ENCODE measurements at regions of chr1 and their contacts with region 1.

Region 1: GRCh38 chr1:232630047-232630893 is at the start of gene SIPA1L2:
- DNase-seq: peak; percentile 94
- H3K4me3 ChIP-seq: peak within 1 kb of the TSS; percentile 68 to 70
- H3K27ac ChIP-seq: peak within 1 kb of the TSS; percentile 85 to 92
- H3K4me1 ChIP-seq: no peaks in the 10 kb centered on the region
- H3K27me3 ChIP-seq: no peaks in the 10 kb centered on the region
- CTCF ChIP-seq: peak in 2 of 4 experiments; percentile 49 to 54
- POLR2A ChIP-seq: peak; percentile 89
- total RNA-seq, gene SIPA1L2: 8.1 to 31.5 TPM

Region 2: GRCh38 chr1:231757101-231757404 is 873.2 kb before region 1 on chr1:
- intact Hi-C with region 1: loop called (anchors 10 kb)
- DNase-seq: no peak
- H3K4me3 ChIP-seq: no peak overlapping the region
- H3K27ac ChIP-seq: no peak overlapping the region
- H3K4me1 ChIP-seq: peaks cover 5% of the 10 kb centered on the region
- H3K27me3 ChIP-seq: no peaks in the 10 kb centered on the region
- CTCF ChIP-seq: no peak
- POLR2A ChIP-seq: no peak

Region 3: DNA sequence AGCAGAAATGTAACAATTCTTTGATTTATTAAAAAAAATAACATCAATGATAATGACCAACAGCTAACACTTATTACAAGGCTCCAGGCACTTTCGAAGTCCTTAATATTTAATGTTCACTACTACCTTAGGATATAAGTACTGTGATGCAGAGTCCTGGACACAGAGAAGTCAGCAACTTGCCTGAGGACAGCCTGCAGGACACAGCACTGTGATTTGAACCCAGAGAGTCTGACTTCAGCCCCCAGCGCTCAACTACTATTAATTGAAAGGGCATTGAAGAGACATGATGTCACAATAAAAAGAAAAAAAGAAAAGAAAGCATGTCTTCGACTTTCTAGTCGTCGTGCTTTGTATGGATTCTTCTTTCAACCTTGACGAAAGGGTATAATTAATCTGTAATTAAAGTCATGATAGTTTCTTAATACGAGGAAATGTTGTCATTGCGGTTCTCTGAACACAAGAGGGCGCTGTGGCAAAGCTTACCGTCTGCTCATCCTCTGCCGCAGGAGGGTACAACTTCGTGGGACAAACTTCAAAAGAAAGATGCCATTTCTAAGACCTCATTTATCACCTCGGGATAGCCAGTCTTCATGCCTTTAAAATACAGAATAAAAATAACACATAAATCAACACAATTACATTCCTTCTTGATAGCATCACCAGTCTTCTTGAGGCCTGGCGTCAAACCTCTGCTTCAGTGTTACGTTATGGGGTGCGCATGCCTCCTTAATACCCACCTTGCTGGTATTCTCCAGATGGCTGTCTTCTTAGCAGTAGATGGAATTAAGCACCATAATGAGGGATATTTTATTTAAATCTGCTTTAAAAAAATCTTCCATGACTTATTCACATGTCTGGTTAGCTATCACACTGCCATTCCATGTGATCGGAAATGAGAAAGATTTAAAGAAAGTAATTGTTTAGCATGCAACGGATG is 763.6 kb before region 1 on chr1:
- intact Hi-C with region 1: loop called (anchors 5 kb)
- DNase-seq: peak; percentile 48
- H3K4me3 ChIP-seq: no peak overlapping the region
- H3K27ac ChIP-seq: no peak overlapping the region
- H3K4me1 ChIP-seq: no peaks in the 10 kb centered on the region
- H3K27me3 ChIP-seq: no peaks in the 10 kb centered on the region
- CTCF ChIP-seq: peak; percentile 68 to 88 (median 81)
- POLR2A ChIP-seq: no peak

Region 4: GRCh38 chr1:232074265-232074664 is 556.0 kb before region 1 on chr1:
- intact Hi-C with region 1: no loop called
- DNase-seq: no peak
- H3K4me3 ChIP-seq: no peak overlapping the region
- H3K27ac ChIP-seq: no peak overlapping the region
- H3K4me1 ChIP-seq: no peaks in the 10 kb centered on the region
- H3K27me3 ChIP-seq: no peaks in the 10 kb centered on the region
- CTCF ChIP-seq: no peak
- POLR2A ChIP-seq: no peak

Region 5: DNA sequence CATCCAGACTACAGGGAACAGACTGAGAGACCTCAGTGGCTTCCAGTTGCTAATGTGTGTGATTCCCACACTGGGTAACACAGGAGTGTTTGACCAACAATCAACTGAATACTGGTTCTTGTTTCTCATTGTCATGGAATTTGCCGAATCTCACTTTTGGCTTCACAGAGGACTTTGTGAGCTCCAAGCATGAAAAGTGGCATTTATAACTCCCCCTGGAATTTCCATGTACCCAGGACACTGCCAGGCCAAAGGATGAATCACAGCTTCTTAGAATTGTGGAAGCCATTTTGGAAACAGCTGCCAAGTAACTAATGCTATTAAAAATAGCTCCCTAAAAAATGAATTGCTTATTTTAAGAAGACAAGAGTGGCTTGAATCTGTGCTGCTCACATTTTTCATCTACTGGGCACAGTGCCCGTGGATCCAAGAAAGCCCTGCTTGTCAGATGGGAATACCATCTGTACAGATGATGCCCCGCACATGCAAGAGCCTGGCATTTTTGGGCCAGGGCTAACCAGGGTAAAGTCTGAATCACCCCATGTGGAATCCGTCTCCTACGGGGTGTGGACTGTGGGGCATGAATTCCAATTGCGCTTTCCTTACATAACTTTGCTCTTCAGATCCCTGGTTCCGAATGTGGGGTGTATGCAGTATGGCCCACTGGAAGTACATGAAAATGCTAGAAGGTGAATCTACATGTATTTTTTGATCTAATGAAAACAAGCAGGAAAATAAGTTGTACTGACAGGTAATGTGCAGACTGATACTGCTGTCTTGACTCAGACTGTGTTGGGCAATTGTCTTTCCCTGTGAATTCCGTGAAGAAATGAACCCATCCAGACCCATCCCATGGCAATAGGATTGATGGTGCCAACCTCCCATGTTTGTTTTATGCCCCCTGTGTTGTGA is 487.6 kb before region 1 on chr1:
- intact Hi-C with region 1: loop called (anchors 5 kb)
- DNase-seq: peak; percentile 21
- H3K4me3 ChIP-seq: no peak overlapping the region
- H3K27ac ChIP-seq: no peak overlapping the region
- H3K4me1 ChIP-seq: no peaks in the 10 kb centered on the region
- H3K27me3 ChIP-seq: no peaks in the 10 kb centered on the region
- CTCF ChIP-seq: no peak
- POLR2A ChIP-seq: no peak

Region 6: DNA sequence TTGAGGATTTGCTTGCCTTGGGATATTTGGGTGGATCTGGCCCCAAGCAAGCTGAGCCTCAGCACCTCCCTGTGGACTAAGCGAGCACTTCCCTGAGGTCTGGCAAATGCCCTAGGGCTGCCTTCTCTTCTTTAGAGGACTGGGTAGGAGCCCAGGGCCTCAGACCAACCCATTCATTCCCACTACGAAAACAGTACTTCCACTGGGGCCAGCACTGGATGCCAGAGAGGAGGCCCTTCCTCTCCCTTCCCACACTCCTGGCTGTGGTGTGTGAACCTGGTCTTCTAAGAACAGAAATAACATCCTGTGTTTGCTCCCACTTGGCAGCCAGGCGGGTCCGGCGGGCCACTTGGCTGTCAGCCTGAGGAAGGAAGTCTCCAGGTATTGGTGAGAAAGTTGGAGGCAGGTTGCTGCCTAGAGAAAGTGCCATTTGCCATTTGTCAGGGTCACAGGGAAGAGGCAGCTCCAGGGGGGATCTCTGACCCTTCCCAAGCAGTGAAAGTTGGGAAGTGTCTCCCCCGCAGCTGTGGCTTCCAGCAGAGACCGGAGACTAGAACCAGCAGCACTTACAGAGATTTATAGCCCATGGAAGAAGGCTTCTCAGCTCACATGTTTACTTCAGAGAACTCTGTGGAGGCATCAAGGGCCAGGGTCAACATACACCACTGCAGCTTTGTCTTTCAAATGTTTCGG is 323.9 kb before region 1 on chr1:
- intact Hi-C with region 1: loop called (anchors 10 kb)
- DNase-seq: peak; percentile 60
- H3K4me3 ChIP-seq: no peak overlapping the region
- H3K27ac ChIP-seq: peak overlapping the region in 1 of 2 donors; percentile 2
- H3K4me1 ChIP-seq: peaks cover 5% of the 10 kb centered on the region
- H3K27me3 ChIP-seq: no peaks in the 10 kb centered on the region
- CTCF ChIP-seq: peak in 2 of 4 experiments; percentile 6 to 23
- POLR2A ChIP-seq: no peak

Region 7: DNA sequence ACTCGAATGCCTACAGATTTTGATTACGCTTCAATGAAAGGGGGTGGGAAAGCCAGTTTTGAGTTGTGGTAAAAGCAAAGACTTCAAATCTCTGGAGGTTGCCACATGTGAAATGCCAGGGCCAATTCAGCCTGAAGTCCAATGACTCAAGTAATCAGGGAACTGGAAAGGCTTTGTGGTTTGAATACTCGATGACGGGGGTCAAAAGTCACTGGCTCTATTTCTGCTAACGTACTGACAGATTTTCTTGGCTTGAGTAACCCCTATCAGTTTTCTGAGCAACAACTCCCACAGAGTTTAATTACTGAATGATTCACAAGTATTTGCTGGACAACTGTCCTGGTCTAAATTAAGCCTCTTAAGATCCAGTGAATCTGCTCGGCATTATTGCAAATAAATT is 152.5 kb before region 1 on chr1:
- intact Hi-C with region 1: loop called (anchors 10 kb)
- DNase-seq: no peak
- H3K4me3 ChIP-seq: no peak overlapping the region
- H3K27ac ChIP-seq: no peak overlapping the region
- H3K4me1 ChIP-seq: no peaks in the 10 kb centered on the region
- H3K27me3 ChIP-seq: no peaks in the 10 kb centered on the region
- CTCF ChIP-seq: no peak
- POLR2A ChIP-seq: no peak

Region 8: GRCh38 chr1:232737917-232738316 is 107.6 kb after region 1 on chr1:
- intact Hi-C with region 1: no loop called
- DNase-seq: no peak
- H3K4me3 ChIP-seq: no peak overlapping the region
- H3K27ac ChIP-seq: no peak overlapping the region
- H3K4me1 ChIP-seq: no peaks in the 10 kb centered on the region
- H3K27me3 ChIP-seq: no peaks in the 10 kb centered on the region
- CTCF ChIP-seq: no peak
- POLR2A ChIP-seq: no peak

Region 9: DNA sequence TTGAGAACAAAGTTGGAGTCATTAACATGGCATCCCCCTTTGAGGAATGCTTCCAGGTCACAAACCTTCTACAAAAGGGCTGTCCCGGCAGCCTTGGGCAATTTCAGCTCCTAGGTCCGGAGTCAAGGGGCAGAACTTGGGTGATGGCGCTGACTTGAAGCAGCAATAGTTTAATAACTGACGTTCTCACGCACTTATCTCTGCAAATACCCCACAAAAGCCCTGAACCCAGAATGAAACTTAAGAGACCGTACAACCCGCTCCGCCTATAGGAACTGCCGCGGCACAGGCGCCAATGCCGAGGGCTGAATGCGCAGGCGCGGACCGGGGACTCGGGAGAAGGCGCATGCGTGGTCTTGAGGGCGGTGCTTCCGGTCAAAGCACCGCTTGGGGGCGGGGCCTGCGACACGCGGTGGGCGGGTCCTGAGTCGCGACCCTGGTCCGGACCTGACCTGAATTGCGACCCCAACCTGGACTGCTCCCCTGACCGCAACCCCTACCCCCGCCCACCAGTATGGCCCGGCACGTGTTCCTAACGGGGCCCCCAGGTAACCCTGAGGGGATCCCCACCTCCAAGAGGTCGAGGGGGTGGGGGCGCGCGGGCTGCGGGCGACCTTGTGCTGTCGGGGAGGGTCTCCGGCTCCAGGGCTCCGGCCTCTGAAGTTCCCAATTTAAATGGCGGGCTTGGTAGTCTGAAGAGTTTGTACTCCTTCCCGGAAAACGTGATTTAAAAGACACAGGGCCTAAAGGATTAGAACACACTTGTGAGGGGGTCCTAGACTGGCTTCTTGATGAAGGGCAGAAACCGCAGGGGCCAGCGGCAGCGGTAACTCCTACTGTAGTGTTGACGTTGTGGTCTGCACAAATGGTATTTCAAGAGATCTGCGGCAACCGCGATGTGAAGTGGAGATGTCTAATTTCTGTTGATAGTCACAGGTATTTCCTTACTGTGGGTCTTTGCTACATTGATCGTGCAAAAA is 320.2 kb after region 1 on chr1 and contains the start of gene NTPCR:
- intact Hi-C with region 1: loop called (anchors 5 kb)
- DNase-seq: peak; percentile 90
- H3K4me3 ChIP-seq: peak within 1 kb of the TSS; percentile 83
- H3K27ac ChIP-seq: peak within 1 kb of the TSS; percentile 76 to 79
- H3K4me1 ChIP-seq: no peaks in the 10 kb centered on the region
- H3K27me3 ChIP-seq: no peaks in the 10 kb centered on the region
- CTCF ChIP-seq: peak in 2 of 4 experiments; percentile 30 to 36
- POLR2A ChIP-seq: peak; percentile 47
- total RNA-seq, gene NTPCR: 28.3 to 29.1 TPM